ENCODE measurements at regions of chr1 and their contacts with region 1.

Region 1: GRCh38 chr1:205273551-205273982 is 45.8 kb downstream of the TMCC2 start:
- DNase-seq: peak; percentile 89
- H3K4me3 ChIP-seq: no peak overlapping the region
- H3K27ac ChIP-seq: peak overlapping the region; percentile 18
- H3K4me1 ChIP-seq: peaks cover 40% of the 10 kb centered on the region
- CTCF ChIP-seq: peak; percentile 98

Region 2: DNA sequence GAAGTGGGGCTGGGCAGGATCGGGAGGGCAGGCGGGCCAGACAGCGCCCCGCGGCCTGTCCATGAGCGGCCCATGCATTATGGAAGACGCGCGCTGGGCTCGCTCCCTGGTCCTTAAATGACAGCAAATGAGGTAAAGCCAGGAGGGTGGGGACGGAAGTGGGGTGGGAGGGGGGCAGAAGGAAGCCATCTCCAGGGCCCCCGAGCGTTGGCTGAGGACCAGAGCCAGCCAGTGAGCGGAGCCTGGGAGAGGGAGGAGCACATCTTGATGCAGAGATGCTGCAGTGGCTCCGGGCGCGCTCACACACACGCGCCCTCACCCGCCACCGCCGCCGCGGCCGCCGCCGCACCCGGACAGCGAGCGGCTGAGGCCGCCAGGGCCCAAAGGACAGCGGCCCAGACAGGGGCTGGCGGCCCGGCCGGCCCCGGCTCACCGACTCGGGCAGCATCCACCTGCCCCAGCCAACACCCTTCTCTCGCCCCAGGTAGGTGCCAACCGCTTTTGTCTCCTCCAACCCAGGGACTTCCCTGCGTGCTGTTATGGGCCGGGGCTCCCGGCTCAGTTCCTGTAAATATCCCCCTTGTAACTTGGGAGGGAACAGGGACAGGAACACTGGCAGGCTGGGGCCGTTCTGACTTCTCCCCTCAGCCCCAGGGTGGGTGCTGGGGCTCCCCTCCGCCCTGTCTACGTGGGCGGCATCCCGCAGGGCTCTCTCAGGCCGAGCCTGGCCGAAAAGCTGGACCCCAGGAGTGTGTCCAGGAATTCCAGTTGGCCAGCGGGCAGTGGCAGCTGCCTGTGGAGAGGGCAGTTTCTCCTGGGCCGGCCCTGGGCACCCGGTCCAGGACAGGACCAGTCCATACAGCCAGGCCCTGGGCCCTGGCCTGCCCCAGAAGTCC is 230.4 kb before region 1 on chr1 and contains the start of gene CNTN2:
- CTCF ChIA-PET with region 1: no interaction called
- POLR2A ChIA-PET with region 1: no interaction called
- intact Hi-C with region 1: no loop called
- DNase-seq: no peak
- H3K4me3 ChIP-seq: no peak within 1 kb of the TSS
- H3K27ac ChIP-seq: no peak within 1 kb of the TSS
- H3K4me1 ChIP-seq: no peaks in the 10 kb centered on the region
- CTCF ChIP-seq: no peak
- total RNA-seq, gene CNTN2: not detected in 2 replicates

Region 3: GRCh38 chr1:205183676-205184335 is 89.8 kb before region 1 on chr1:
- CTCF ChIA-PET with region 1: no interaction called
- POLR2A ChIA-PET with region 1: no interaction called
- intact Hi-C with region 1: no loop called
- DNase-seq: no peak
- H3K4me3 ChIP-seq: no peak overlapping the region
- H3K27ac ChIP-seq: no peak overlapping the region
- H3K4me1 ChIP-seq: no peaks in the 10 kb centered on the region
- CTCF ChIP-seq: no peak

Region 4: GRCh38 chr1:205227584-205228006 is 46.0 kb before region 1 on chr1 and contains the start of gene TMCC2:
- CTCF ChIA-PET with region 1: interaction called, 8 read pairs
- POLR2A ChIA-PET with region 1: interaction called, 3 read pairs
- intact Hi-C with region 1: loop called (anchors 5 kb)
- DNase-seq: peak; percentile 94
- H3K4me3 ChIP-seq: peak within 1 kb of the TSS; percentile 77
- H3K27ac ChIP-seq: peak within 1 kb of the TSS; percentile 17
- H3K4me1 ChIP-seq: peaks cover 28% of the 10 kb centered on the region
- CTCF ChIP-seq: no peak
- total RNA-seq, gene TMCC2: 7.0 and 7.8 TPM in 2 replicates

Region 5: GRCh38 chr1:205284343-205285144 is 11.0 kb after region 1 on chr1:
- CTCF ChIA-PET with region 1: interaction called, 21 read pairs
- POLR2A ChIA-PET with region 1: interaction called, 45 read pairs
- intact Hi-C with region 1: loop called (anchors 1 kb)
- DNase-seq: peak; percentile 92
- H3K4me3 ChIP-seq: peak overlapping the region; percentile 44
- H3K27ac ChIP-seq: peak overlapping the region; percentile 94
- H3K4me1 ChIP-seq: peaks cover 88% of the 10 kb centered on the region
- CTCF ChIP-seq: no peak

Region 6: GRCh38 chr1:205313563-205314308 is 40.2 kb after region 1 on chr1:
- CTCF ChIA-PET with region 1: interaction called, 10 read pairs
- POLR2A ChIA-PET with region 1: interaction called, 5 read pairs
- intact Hi-C with region 1: no loop called
- DNase-seq: peak; percentile 76
- H3K4me3 ChIP-seq: peak overlapping the region; percentile 60
- H3K27ac ChIP-seq: peak overlapping the region; percentile 66
- H3K4me1 ChIP-seq: peaks cover 83% of the 10 kb centered on the region
- CTCF ChIP-seq: no peak

Region 7: GRCh38 chr1:205321164-205321958 is 47.8 kb after region 1 on chr1 and contains the start of gene NUAK2:
- CTCF ChIA-PET with region 1: interaction called, 60 read pairs
- POLR2A ChIA-PET with region 1: interaction called, 30 read pairs
- intact Hi-C with region 1: loop called (anchors 1 kb)
- DNase-seq: peak; percentile 87
- H3K4me3 ChIP-seq: peak within 1 kb of the TSS; percentile 75
- H3K27ac ChIP-seq: peak within 1 kb of the TSS; percentile 16
- H3K4me1 ChIP-seq: peaks cover 61% of the 10 kb centered on the region
- CTCF ChIP-seq: peak; percentile 61
- total RNA-seq, gene NUAK2: 6.5 and 9.1 TPM in 2 replicates

Region 8: DNA sequence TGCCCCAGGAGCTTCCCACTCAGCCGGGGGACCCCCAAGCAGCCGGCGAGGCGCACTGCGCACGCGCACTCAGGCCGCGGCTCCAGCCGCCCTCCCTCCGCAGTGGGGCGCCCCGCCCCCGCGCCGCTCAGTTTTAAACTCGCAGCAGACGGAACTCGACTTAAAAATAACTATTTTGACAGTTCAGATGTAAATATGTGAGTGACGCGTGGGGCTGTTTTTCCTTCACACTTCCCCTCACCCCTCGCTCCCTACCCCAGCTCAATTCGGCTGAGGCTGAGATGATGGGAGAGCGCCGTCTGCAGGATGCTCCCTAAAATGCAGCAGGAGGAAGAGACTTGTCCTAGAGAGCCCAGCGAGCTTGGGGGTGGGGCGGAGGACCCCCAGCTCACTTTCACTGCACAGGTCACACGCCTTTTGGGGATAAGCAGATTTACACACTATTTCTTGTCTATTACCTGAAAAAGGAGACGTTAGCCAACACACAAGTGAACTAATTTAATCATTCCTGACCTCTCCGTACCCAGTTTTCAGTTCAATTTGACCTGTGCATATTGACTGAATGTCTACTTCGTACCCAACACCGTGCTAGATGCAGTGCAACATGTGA is 157.2 kb after region 1 on chr1:
- CTCF ChIA-PET with region 1: no interaction called
- POLR2A ChIA-PET with region 1: no interaction called
- intact Hi-C with region 1: loop called (anchors 5 kb)
- DNase-seq: peak; percentile 88
- H3K4me3 ChIP-seq: peak overlapping the region; percentile 60
- H3K27ac ChIP-seq: peak overlapping the region; percentile 37
- H3K4me1 ChIP-seq: peaks cover 34% of the 10 kb centered on the region
- CTCF ChIP-seq: peak; percentile 97

Region 9: GRCh38 chr1:205485338-205486228 is 212.0 kb after region 1 on chr1:
- CTCF ChIA-PET with region 1: no interaction called
- POLR2A ChIA-PET with region 1: no interaction called
- intact Hi-C with region 1: loop called (anchors 5 kb)
- DNase-seq: peak; percentile 84
- H3K4me3 ChIP-seq: no peak overlapping the region
- H3K27ac ChIP-seq: no peak overlapping the region
- H3K4me1 ChIP-seq: peaks cover 10% of the 10 kb centered on the region
- CTCF ChIP-seq: peak; percentile 94